ENCODE measurements at regions of chr1 and their contacts with region 1.

Region 1: GRCh38 chr1:241531195-241532161 is 700 bp upstream of the KMO start:
- DNase-seq: peak in 2 of 4 donors; percentile 68 to 72
- ATAC-seq: peak; percentile 97
- H3K4me3 ChIP-seq: peak overlapping the region; percentile 38 to 47
- H3K27ac ChIP-seq: peak overlapping the region; percentile 67 to 83
- H3K4me1 ChIP-seq: peaks cover 0 to 8% of the 10 kb centered on the region in 2 donors
- H3K27me3 ChIP-seq: no peaks in the 10 kb centered on the region
- CTCF ChIP-seq: peak; percentile 34 to 51

Region 2: GRCh38 chr1:241376701-241377100 is 154.8 kb before region 1 on chr1:
- intact Hi-C with region 1: no loop called
- DNase-seq: no peak
- ATAC-seq: no peak
- H3K4me3 ChIP-seq: no peak overlapping the region
- H3K27ac ChIP-seq: no peak overlapping the region
- H3K4me1 ChIP-seq: no peaks in the 10 kb centered on the region
- H3K27me3 ChIP-seq: no peaks in the 10 kb centered on the region
- CTCF ChIP-seq: no peak

Region 3: DNA sequence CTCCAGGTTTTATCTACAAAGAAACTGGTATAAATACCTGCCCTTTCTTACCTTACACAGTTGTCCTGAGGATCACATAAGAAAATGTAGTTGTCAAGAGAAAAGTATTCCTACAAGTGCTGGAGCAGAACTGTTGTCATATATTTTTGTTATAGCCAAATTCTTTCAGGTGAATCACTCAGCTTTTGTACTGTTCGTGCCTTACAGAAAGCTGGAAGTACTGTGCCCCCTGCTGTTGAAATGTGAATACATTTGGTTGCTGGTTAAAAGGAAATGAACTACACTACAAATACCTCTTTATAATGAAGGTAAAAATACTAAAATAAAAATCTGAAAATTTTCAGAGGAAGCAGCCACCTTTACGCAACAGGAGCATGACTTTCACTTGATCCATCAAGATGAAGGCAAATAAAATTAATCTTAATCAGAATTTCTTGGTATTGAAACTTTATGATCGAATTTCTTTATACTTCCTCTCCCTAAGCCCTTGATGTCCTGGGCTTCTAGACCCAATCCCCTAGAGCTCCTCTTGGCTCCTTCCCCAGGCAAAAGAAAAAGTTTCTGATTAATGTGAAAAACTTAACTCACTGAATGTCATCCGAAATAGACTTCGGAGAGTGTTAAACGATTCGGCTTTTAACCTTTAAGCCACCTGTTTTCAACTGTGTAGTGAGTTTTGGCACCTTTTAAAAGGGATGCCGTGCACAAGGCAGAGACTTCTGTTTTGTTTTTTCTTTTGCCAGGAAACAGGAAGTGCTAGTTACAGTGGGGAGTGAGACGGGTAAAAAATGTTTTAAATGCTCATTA is 96.2 kb after region 1 on chr1:
- intact Hi-C with region 1: loop called in 1 of 2 experiments (anchors 10 kb)
- DNase-seq: peak in 1 of 4 donors; percentile 33
- ATAC-seq: peak; percentile 81
- H3K4me3 ChIP-seq: no peak overlapping the region
- H3K27ac ChIP-seq: peak overlapping the region in 1 of 2 donors; percentile 21
- H3K4me1 ChIP-seq: peaks cover 0 to 8% of the 10 kb centered on the region in 2 donors
- H3K27me3 ChIP-seq: no peaks in the 10 kb centered on the region
- CTCF ChIP-seq: peak in 1 of 2 donors; percentile 34

Region 4: GRCh38 chr1:241716915-241717656 is 185.6 kb after region 1 on chr1:
- intact Hi-C with region 1: no loop called
- DNase-seq: no peak
- ATAC-seq: no peak
- H3K4me3 ChIP-seq: no peak overlapping the region
- H3K27ac ChIP-seq: no peak overlapping the region
- H3K4me1 ChIP-seq: no peaks in the 10 kb centered on the region
- H3K27me3 ChIP-seq: peaks cover 9 to 46% of the 10 kb centered on the region in 2 donors
- CTCF ChIP-seq: no peak

Region 5: GRCh38 chr1:241828463-241829021 is 297.1 kb after region 1 on chr1:
- intact Hi-C with region 1: loop called in 1 of 2 experiments (anchors 10 kb)
- DNase-seq: no peak
- ATAC-seq: no peak
- H3K4me3 ChIP-seq: no peak overlapping the region
- H3K27ac ChIP-seq: no peak overlapping the region
- H3K4me1 ChIP-seq: no peaks in the 10 kb centered on the region
- H3K27me3 ChIP-seq: peaks cover 0 to 4% of the 10 kb centered on the region in 2 donors
- CTCF ChIP-seq: no peak

Measured in left lung (tissue), 14 donors.